ENCODE measurements at regions of chr1 and their contacts with region 1.

Region 1: GRCh38 chr1:190957570-190957969 is 479.9 kb upstream of the BRINP3 start:
- DNase-seq: no peak
- H3K4me3 ChIP-seq: no peak overlapping the region
- H3K27ac ChIP-seq: no peak overlapping the region
- H3K27me3 ChIP-seq: no peaks in the 10 kb centered on the region
- CTCF ChIP-seq: peak; percentile 44

Region 2: DNA sequence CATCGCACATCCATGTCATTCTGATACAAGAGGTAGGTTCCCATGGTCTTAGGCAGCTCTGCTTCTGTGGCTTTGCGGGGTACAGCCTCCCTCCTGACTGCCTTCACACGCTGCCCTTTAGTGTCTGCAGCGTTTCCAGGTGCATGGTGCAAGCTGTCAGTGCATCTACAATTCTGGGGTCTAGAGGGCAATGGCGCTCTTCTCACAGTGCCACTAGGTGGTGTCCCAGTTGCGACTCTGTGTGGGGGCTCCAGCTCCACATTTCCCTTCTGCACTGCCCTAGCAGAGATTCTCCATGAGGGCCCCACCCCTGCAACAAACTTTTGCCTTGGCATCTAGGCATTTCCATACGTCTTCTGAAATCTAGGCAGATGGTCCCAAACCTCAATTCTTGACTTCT is 341.8 kb before region 1 on chr1:
- CTCF ChIA-PET with region 1: interaction called, 15 read pairs
- POLR2A ChIA-PET with region 1: no interaction called
- DNase-seq: no peak
- H3K4me3 ChIP-seq: no peak overlapping the region
- H3K27ac ChIP-seq: no peak overlapping the region
- H3K27me3 ChIP-seq: no peaks in the 10 kb centered on the region
- CTCF ChIP-seq: no peak

Region 3: DNA sequence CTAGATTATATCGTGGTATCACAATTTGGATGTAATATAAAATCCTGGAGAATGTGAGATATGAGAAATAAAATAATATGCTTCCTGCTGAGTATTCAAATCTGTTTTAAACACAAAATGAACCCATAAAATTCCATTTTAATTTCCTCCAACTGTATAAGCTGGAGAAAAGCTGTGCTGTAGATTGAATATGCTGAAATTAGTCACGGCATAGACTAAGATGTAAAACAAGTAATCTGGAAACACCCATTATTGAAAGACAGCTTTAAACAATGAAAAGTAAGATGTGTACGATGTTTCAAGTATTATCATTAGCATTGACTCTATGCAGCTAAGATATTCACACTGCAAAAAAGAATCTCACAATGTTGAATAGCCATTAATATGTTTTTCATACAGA is 76.5 kb before region 1 on chr1:
- CTCF ChIA-PET with region 1: no interaction called
- POLR2A ChIA-PET with region 1: no interaction called
- DNase-seq: no peak
- H3K4me3 ChIP-seq: no peak overlapping the region
- H3K27ac ChIP-seq: no peak overlapping the region
- H3K27me3 ChIP-seq: no peaks in the 10 kb centered on the region
- CTCF ChIP-seq: no peak

Region 4: GRCh38 chr1:191016765-191017164 is 59.2 kb after region 1 on chr1:
- CTCF ChIA-PET with region 1: no interaction called
- POLR2A ChIA-PET with region 1: no interaction called
- DNase-seq: no peak
- H3K4me3 ChIP-seq: no peak overlapping the region
- H3K27ac ChIP-seq: no peak overlapping the region
- H3K27me3 ChIP-seq: no peaks in the 10 kb centered on the region
- CTCF ChIP-seq: no peak

Measured in AG04450 (cell line).